MCF 10A (cell line): ENCODE measurements at regions of chr13 and their contacts with region 1.

Region 1: DNA sequence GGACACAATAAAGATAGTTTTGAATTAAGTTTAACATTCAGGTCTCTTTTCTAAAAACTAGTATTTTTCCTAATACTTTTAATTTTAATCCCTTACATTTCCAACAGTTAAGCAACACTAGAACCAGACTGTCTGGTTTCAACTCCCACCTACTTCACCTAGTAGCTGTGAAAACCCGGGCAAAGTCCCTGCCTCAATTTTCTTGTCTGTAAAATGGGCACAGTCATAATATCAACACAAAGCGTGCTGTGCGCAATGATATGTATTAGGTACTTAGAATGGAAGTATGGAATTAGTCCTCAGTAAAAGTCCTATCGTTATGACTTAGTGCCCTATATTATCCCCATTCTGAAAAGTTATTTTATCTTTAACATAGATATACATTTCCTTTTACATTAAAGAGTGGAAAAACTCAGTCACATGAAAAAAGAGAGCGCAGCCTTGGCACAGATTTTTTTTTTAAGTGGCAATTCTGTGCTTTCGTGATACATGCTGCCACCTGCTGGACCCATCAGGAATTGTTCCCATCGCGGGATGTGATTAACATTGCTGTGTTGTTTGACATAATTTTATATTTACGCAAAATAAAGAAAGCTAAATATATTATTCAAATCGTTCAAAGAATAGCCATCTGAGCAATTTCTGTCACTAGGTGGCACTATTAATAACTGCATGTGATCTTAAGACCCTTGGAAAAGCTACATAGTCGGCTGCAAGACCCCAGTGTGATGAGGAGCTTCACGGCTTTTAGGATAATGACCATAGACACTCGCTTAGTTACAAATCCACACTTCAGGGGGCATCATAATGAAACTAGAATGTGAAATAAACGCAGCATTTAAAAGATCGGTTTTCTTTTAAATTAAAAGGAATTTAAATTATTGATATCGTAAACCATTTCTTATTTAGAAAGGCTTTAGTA is 59.9 kb downstream of the LIG4 start:
- DNase-seq: peak; percentile 67
- H3K4me3 Mint-ChIP-seq: no peak overlapping the region
- H3K27ac Mint-ChIP-seq: no peak overlapping the region
- H3K4me1 Mint-ChIP-seq: no peaks in the 10 kb centered on the region
- H3K27me3 Mint-ChIP-seq: no peaks in the 10 kb centered on the region
- CTCF ChIP-seq: peak; percentile 69

Region 2: DNA sequence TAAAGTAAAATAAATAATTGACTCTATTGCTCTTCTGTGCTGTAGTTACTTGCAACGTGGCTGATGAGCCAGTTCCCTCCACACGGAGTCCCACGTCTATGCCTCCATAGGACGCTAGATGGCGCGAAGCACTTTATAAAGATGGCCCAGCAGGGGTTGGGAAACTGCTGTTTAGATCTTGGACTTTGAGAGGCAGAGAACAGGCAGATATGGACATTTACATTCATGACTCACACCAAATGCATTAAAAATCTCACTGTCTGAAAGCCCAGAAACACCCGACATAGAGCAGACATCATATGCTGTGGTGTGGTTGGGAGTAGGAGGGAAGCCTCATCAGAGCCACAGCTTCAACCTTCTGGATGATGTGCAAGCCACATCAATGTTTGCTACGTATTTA is 944.4 kb before region 1 on chr13:
- CTCF ChIA-PET with region 1: interaction called, 85 read pairs
- POLR2A ChIA-PET with region 1: no interaction called
- intact Hi-C with region 1: loop called (anchors 1 kb)
- DNase-seq: peak; percentile 89
- H3K4me3 Mint-ChIP-seq: no peak overlapping the region
- H3K27ac Mint-ChIP-seq: no peak overlapping the region
- H3K4me1 Mint-ChIP-seq: peaks cover 5% of the 10 kb centered on the region
- H3K27me3 Mint-ChIP-seq: peaks cover 20% of the 10 kb centered on the region
- CTCF ChIP-seq: peak; percentile 87

Region 3: DNA sequence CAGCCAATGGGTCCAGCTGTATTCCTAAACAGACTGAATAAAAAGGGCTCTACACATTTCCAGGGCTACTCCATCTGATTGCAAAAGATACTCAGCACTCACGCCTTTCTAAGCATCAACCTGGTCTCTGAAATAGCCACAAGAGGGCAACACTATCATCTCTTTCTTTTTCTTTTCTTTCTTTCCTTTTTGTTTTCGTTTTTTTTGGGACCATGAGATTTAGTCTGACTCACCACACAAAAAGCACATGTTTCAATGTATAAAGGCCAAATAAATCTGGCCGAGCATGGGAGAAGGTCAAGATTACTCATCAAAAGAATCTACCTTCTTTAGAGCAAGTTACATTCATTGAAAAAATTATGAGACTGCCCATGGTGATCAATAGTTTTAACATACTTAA is 781.9 kb before region 1 on chr13:
- CTCF ChIA-PET with region 1: interaction called, 26 read pairs
- POLR2A ChIA-PET with region 1: interaction called, 3 read pairs
- intact Hi-C with region 1: loop called (anchors 1 kb)
- DNase-seq: peak; percentile 78
- H3K4me3 Mint-ChIP-seq: no peak overlapping the region
- H3K27ac Mint-ChIP-seq: no peak overlapping the region
- H3K4me1 Mint-ChIP-seq: no peaks in the 10 kb centered on the region
- H3K27me3 Mint-ChIP-seq: no peaks in the 10 kb centered on the region
- CTCF ChIP-seq: peak; percentile 33

Region 4: DNA sequence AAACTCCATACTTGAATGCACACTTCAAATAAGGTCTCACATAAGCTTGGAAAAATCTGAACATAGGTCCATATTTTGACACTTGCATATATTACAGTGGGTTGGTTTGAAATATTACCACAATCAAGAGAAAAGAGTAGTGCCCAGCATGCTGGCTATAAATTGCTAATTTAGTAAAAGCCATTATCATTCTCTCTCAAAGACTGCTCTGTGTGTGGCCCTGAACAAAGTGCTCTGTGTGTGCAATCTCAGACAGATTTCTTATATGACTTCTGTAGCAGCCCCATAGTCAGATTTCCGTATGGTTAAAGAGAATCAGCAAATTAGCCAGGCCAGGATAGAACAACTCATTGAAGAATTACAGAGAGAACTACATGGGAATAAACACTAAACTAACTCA is 18.3 kb before region 1 on chr13:
- CTCF ChIA-PET with region 1: interaction called, 46 read pairs
- POLR2A ChIA-PET with region 1: no interaction called
- intact Hi-C with region 1: no loop called
- DNase-seq: no peak
- H3K4me3 Mint-ChIP-seq: no peak overlapping the region
- H3K27ac Mint-ChIP-seq: no peak overlapping the region
- H3K4me1 Mint-ChIP-seq: no peaks in the 10 kb centered on the region
- H3K27me3 Mint-ChIP-seq: peaks cover 12% of the 10 kb centered on the region
- CTCF ChIP-seq: no peak

Region 5: GRCh38 chr13:108176685-108177274 is 21.3 kb after region 1 on chr13:
- CTCF ChIA-PET with region 1: interaction called, 15 read pairs
- POLR2A ChIA-PET with region 1: no interaction called
- intact Hi-C with region 1: no loop called
- DNase-seq: peak; percentile 40
- H3K4me3 Mint-ChIP-seq: no peak overlapping the region
- H3K27ac Mint-ChIP-seq: no peak overlapping the region
- H3K4me1 Mint-ChIP-seq: no peaks in the 10 kb centered on the region
- H3K27me3 Mint-ChIP-seq: no peaks in the 10 kb centered on the region
- CTCF ChIP-seq: peak; percentile 33

Region 6: DNA sequence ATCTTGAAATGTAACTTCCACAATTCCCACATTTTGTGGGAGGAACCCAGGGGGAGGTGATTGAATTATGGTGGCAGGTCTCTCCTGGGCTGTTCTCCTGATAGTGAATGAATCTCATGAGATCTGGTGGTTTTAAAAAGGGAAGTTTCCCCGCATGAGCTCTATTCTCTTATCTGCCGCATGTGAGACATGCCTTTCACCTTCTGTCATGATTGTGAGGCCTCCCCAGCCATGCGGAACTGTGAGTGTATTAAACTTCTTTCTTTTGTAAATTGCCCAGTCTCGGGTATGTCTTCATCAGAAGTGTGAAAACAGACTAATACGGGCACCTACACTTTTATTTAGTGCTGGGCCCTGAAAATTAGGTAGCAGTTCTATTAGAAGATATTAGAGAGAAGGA is 159.8 kb after region 1 on chr13:
- CTCF ChIA-PET with region 1: no interaction called
- POLR2A ChIA-PET with region 1: no interaction called
- intact Hi-C with region 1: no loop called
- DNase-seq: no peak
- H3K4me3 Mint-ChIP-seq: no peak overlapping the region
- H3K27ac Mint-ChIP-seq: no peak overlapping the region
- H3K4me1 Mint-ChIP-seq: peaks cover 6% of the 10 kb centered on the region
- H3K27me3 Mint-ChIP-seq: peaks cover 33% of the 10 kb centered on the region
- CTCF ChIP-seq: no peak